HepG2 (cell line): ENCODE measurements at regions of chr21 and their contacts with region 1.

Region 1: GRCh38 chr21:43646550-43647260 is 12.6 kb downstream of the HSF2BP start:
- DNase-seq: peak; percentile 90
- ATAC-seq: peak; percentile 98
- H3K4me3 ChIP-seq: no peak overlapping the region
- H3K27ac ChIP-seq: no peak overlapping the region
- H3K4me1 ChIP-seq: peaks cover 24% of the 10 kb centered on the region
- H3K27me3 ChIP-seq: no peaks in the 10 kb centered on the region
- CTCF ChIP-seq: peak; percentile 99
- EP300 ChIP-seq: no peak
- POLR2A ChIP-seq: no peak
- RAD21 ChIP-seq: peak; percentile 97

Region 2: DNA sequence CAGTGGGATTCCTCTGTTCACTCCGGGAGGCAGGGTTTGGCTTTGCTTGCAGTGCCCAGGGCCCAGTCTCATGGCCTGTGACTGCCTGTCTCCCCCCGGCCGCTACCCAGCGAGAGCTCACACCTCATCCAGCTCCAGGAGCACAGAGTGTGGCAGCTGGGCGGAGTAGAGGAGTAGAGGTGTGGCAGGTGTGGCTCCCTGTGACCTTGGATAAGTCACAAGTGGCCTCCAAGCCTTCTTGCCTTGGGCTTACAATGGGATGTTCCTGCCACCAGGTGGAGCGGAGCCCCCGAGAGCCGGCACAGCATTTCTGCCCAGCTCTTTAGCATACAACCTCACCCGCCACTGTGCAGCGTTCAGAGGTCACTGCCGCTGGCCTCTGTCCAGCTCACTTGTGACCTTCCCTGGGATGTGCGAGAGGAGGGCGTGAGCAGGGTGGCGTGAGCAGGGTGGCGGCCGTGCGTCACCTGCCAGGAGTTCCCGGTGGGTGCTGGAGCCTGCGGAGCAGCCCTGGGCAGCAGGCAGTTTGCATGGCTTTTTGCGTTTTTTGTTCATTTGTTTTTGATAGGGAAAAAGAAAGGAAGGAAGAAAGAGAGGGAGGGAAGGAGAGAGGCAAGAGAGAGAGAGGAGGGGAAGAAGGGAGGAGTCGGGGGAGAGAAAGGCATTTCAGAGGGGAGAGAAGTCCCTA is 435.5 kb before region 1 on chr21:
- CTCF ChIA-PET with region 1: interaction called, 12 read pairs
- POLR2A ChIA-PET with region 1: no interaction called
- in situ Hi-C with region 1: no loop called
- intact Hi-C with region 1: no loop called
- DNase-seq: peak; percentile 90
- ATAC-seq: peak; percentile 92
- H3K4me3 ChIP-seq: peak overlapping the region in 2 of 3 experiments; percentile 36 to 62; a peak in 4 of 6 replicates
- H3K27ac ChIP-seq: peak overlapping the region; percentile 59
- H3K4me1 ChIP-seq: peaks cover 36% of the 10 kb centered on the region
- H3K27me3 ChIP-seq: no peaks in the 10 kb centered on the region
- CTCF ChIP-seq: peak; percentile 97
- EP300 ChIP-seq: peak in 1 of 2 experiments; percentile 42; a peak in 1 of 4 replicates
- POLR2A ChIP-seq: peak in 1 of 2 experiments; percentile 51; a peak in 1 of 4 replicates
- RAD21 ChIP-seq: peak; percentile 95

Region 3: GRCh38 chr21:43312751-43313169 is 333.9 kb before region 1 on chr21:
- CTCF ChIA-PET with region 1: no interaction called
- POLR2A ChIA-PET with region 1: no interaction called
- in situ Hi-C with region 1: no loop called
- intact Hi-C with region 1: loop called (anchors 5 kb)
- DNase-seq: peak; percentile 44
- ATAC-seq: peak; percentile 27
- H3K4me3 ChIP-seq: peak overlapping the region in 2 of 3 experiments; percentile 6 to 48; a peak in 2 of 6 replicates
- H3K27ac ChIP-seq: no peak overlapping the region
- H3K4me1 ChIP-seq: peaks cover 41% of the 10 kb centered on the region
- H3K27me3 ChIP-seq: no peaks in the 10 kb centered on the region
- CTCF ChIP-seq: 0 out of 2 replicates have a peak, but pooled peaks have one; percentile 12
- EP300 ChIP-seq: no peak
- POLR2A ChIP-seq: no peak
- RAD21 ChIP-seq: no peak

Region 4: GRCh38 chr21:43340491-43341377 is 306.0 kb before region 1 on chr21:
- CTCF ChIA-PET with region 1: no interaction called
- POLR2A ChIA-PET with region 1: no interaction called
- in situ Hi-C with region 1: no loop called
- intact Hi-C with region 1: loop called (anchors 5 kb)
- DNase-seq: no peak
- ATAC-seq: no peak
- H3K4me3 ChIP-seq: no peak overlapping the region
- H3K27ac ChIP-seq: no peak overlapping the region
- H3K4me1 ChIP-seq: peaks cover 50% of the 10 kb centered on the region
- H3K27me3 ChIP-seq: 0 out of 5 replicates have a peak, but pooled peaks cover 1 to 8% of the 10 kb centered on the region in 2 experiments
- CTCF ChIP-seq: no peak
- EP300 ChIP-seq: no peak
- POLR2A ChIP-seq: no peak
- RAD21 ChIP-seq: no peak

Region 5: GRCh38 chr21:43611598-43612369 is 34.9 kb before region 1 on chr21:
- CTCF ChIA-PET with region 1: interaction called, 17 read pairs
- POLR2A ChIA-PET with region 1: no interaction called
- in situ Hi-C with region 1: no loop called
- intact Hi-C with region 1: loop called (anchors 1 kb)
- DNase-seq: peak; percentile 75
- ATAC-seq: peak; percentile 91
- H3K4me3 ChIP-seq: no peak overlapping the region
- H3K27ac ChIP-seq: peak overlapping the region; percentile 53
- H3K4me1 ChIP-seq: peaks cover 57% of the 10 kb centered on the region
- H3K27me3 ChIP-seq: no peaks in the 10 kb centered on the region
- CTCF ChIP-seq: peak; percentile 86
- EP300 ChIP-seq: no peak
- POLR2A ChIP-seq: no peak
- RAD21 ChIP-seq: peak; percentile 69

Region 6: GRCh38 chr21:43797925-43798715 is 151.4 kb after region 1 on chr21:
- CTCF ChIA-PET with region 1: no interaction called
- POLR2A ChIA-PET with region 1: no interaction called
- in situ Hi-C with region 1: no loop called
- intact Hi-C with region 1: no loop called
- DNase-seq: no peak
- ATAC-seq: no peak
- H3K4me3 ChIP-seq: no peak overlapping the region
- H3K27ac ChIP-seq: no peak overlapping the region
- H3K4me1 ChIP-seq: no peaks in the 10 kb centered on the region
- H3K27me3 ChIP-seq: no peaks in the 10 kb centered on the region
- CTCF ChIP-seq: no peak
- EP300 ChIP-seq: no peak
- POLR2A ChIP-seq: no peak
- RAD21 ChIP-seq: no peak